Dendritic cell treated with granulocyte-macrophage colony-stimulating factor and Interleukin-4, amounts not matched to agents 40 ng/mL and 50 ng/mL, for 4 days (primary cell): ENCODE measurements at regions of chr1 and their contacts with region 1.

Region 1: GRCh38 chr1:200639790-200640669 is 19.5 kb upstream of the KIF14 start:
- H3K4me3 Mint-ChIP-seq: no peak overlapping the region
- H3K27ac Mint-ChIP-seq: peak overlapping the region; percentile 84
- H3K4me1 Mint-ChIP-seq: peaks cover 36% of the 10 kb centered on the region
- H3K27me3 Mint-ChIP-seq: no peaks in the 10 kb centered on the region

Region 2: DNA sequence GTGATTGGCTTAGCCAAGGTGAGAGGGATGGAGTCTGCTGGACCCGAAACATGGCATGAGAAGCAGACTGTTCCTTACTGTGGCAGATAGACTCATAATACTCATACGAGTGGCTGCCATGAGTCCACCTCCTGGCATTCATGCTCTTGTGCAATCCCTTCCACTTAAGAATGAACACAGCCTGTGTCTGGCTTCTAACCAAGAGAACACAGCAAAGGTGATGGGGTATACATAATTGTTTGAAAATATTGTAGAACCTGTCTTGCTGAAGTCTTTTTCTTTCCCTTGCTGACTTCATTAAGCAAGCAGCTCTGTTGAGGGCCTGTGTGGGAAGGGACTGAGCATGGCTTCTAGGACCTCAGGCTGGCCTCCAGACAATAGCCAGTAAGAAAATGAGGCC is 316.1 kb before region 1 on chr1:
- intact Hi-C with region 1: no loop called
- H3K4me3 Mint-ChIP-seq: no peak overlapping the region
- H3K27ac Mint-ChIP-seq: no peak overlapping the region
- H3K4me1 Mint-ChIP-seq: no peaks in the 10 kb centered on the region
- H3K27me3 Mint-ChIP-seq: peaks cover 6% of the 10 kb centered on the region

Region 3: DNA sequence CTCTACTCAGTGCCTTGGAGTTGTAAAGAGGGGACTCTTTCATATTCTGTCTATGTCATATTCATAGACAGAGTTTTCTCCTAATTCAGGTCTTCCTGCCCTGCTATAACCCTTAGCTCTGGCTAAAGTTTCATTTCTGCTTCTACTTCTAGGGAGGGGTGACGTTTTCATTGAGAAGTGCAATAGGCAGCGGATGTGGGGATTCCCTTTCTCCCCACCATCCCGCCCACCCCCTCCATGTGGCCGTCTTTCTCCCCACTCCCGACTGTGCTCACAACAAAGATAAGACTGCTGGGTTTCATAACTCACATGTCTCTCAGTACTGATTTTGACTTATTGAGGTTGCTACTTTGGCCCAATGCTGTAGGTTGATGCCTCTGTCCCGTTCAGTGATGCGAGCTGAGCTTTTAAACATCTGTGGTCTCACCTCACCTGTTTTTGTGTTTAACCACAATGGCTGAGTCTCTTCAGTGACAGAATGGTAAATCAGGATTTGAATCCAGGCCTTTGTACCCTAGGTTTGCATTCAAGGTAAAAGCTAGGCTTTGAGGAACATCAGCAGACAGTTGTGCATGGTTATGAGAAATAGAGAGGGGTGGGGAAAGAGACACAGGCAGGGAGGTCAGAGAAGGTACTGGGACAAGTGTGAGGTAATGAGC is 11.7 kb before region 1 on chr1:
- intact Hi-C with region 1: loop called (anchors 1 kb)
- H3K4me3 Mint-ChIP-seq: peak overlapping the region; percentile 55
- H3K27ac Mint-ChIP-seq: peak overlapping the region; percentile 95
- H3K4me1 Mint-ChIP-seq: peaks cover 30% of the 10 kb centered on the region
- H3K27me3 Mint-ChIP-seq: peaks cover 4% of the 10 kb centered on the region